PC-9 (cell line): ENCODE measurements at regions of chr7 and their contacts with region 1.

Region 1: DNA sequence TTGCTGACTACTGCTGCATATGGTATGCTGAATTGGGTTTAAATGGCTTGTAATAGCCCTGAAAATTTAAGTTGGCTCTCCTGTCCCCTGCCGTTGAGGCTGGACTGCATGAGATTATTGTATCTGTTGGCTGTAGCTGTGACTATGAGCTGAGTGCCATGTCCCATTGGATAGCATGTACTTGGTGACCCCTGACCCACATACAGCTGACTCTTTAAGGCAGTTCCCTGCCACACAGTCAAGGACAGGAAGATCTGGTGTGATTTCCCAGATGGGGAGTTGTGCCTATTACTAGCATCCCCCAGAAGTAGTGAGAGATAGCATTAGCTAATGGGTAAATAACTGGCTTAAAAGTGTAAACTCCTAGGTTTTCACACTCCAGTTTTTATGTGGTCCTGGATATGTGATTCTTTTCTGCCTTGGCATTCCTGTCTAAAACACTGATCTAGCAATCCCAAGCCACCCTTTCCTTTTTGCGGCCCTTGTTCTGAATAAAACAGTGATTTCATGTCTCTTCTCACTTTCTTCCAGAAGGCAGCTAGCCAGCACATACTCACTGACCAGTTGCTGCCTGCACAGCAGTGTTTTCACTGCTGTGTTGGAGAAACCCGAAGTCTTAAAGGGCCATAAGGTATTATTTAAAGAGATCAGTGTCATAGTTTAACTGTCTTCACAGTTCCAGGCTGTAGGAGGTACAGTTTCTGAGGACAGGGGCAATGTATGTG is 35.9 kb downstream of the LRRC4 start:
- DNase-seq: no peak
- H3K4me3 ChIP-seq: no peak overlapping the region
- H3K27ac ChIP-seq: no peak overlapping the region
- H3K4me1 ChIP-seq: no peaks in the 10 kb centered on the region
- H3K27me3 ChIP-seq: no peaks in the 10 kb centered on the region
- CTCF ChIP-seq: no peak

Region 2: GRCh38 chr7:127485482-127485881 is 509.8 kb before region 1 on chr7:
- CTCF ChIA-PET with region 1: no interaction called
- POLR2A ChIA-PET with region 1: interaction called, 15 read pairs
- intact Hi-C with region 1: no loop called
- DNase-seq: no peak
- H3K4me3 ChIP-seq: no peak overlapping the region
- H3K27ac ChIP-seq: no peak overlapping the region
- H3K4me1 ChIP-seq: no peaks in the 10 kb centered on the region
- H3K27me3 ChIP-seq: 0 out of 2 replicates have a peak, but pooled peaks cover 3% of the 10 kb centered on the region
- CTCF ChIP-seq: no peak

Region 3: GRCh38 chr7:127983804-127984332 is 11.4 kb before region 1 on chr7:
- CTCF ChIA-PET with region 1: interaction called, 13 read pairs
- POLR2A ChIA-PET with region 1: no interaction called
- intact Hi-C with region 1: no loop called
- DNase-seq: peak; percentile 8 to 59
- H3K4me3 ChIP-seq: no peak overlapping the region
- H3K27ac ChIP-seq: no peak overlapping the region
- H3K4me1 ChIP-seq: peaks cover 7% of the 10 kb centered on the region
- H3K27me3 ChIP-seq: no peaks in the 10 kb centered on the region
- CTCF ChIP-seq: no peak

Region 4: DNA sequence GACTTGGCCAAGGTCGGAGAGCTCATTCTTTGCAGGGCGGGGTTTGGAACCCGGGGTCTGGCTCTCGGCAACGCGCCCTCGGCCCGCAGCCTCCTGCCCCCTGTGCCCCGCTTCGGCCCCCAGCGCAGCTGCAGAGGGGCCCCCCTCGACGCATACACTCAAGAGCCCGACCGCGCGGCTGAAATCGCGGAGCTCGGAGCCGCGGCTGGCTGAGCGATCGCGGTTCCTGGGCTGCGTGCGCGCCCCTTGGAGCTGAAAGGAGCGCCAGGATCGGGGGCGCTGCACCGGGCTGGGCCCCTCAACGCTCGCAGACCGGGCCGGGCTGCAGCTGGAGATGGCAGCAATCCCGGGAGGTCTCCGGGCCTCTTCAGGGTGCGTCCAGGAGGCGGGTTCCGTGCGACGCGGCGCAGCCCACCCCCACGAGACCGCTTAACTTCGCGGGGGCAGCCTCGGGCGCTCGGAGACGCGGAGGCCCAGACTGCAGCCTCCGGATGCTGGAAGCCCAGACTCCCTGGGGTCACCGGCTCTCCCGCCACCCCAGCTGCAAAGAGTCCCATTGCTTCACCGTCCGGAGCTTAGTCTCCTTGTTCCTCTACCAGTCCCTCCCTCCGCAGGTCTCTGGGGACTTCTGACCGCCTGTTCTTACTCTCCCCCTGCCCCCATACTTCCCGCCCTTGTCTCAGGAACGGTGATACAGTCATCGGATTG is 108.9 kb after region 1 on chr7:
- CTCF ChIA-PET with region 1: no interaction called
- POLR2A ChIA-PET with region 1: no interaction called
- intact Hi-C with region 1: no loop called
- DNase-seq: no peak
- H3K4me3 ChIP-seq: no peak overlapping the region
- H3K27ac ChIP-seq: no peak overlapping the region
- H3K4me1 ChIP-seq: no peaks in the 10 kb centered on the region
- H3K27me3 ChIP-seq: peaks cover 7% of the 10 kb centered on the region
- CTCF ChIP-seq: no peak